B cell (primary cell): ENCODE measurements at regions of chr7 and their contacts with region 1.

Region 1: DNA sequence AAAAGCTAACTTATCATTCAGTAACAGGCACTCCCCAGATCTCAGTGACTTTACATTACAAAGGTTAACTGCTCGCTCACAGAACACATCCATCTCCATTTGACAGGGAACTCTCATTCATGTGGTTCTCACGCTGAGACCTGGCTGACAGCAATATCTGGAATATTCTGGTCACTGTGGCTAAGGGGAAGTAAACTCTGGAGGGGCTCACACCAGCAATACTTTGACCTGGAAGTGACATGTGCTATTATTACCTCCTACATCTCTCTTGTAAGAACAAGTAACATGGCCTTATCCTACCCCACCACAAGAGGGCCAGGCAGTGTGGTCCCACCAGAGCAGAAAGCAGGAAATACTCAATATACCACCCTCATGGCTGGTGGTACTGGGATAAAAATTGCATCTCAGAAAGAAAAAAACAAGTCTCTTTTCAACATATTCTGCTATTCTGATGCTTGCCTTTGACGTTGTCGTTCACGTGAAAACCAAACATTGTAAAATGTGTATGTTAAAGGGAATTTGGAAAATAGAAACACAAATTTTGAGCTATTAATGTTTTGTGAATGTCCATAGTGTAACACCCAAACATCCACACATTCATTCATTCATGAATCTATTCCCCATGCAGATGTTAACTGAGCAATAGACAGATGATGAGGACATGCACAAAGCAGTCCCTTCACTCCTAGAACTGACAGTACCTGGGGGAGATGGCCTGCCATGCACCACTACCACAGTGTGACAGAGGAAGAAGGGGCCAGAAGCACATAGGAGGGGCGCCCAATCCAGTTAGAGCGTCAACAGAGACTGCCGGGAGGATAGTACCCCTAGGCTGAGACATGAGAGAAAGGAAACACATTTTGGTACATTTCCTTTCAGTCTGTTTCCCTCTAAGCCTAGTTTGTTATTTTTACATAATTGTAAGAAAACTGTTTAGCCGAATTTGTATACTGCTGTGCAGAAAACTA is 166.0 kb upstream of the SP4 start:
- DNase-seq: peak; percentile 73
- ATAC-seq: peak; percentile 93
- H3K4me3 ChIP-seq: no peak overlapping the region
- H3K4me3 Mint-ChIP-seq: peak overlapping the region; percentile 14
- H3K27ac ChIP-seq: peak overlapping the region in 1 of 2 donors; percentile 28
- H3K27ac Mint-ChIP-seq: peak overlapping the region; percentile 67
- H3K4me1 ChIP-seq: peaks cover 12% of the 10 kb centered on the region in 2 donors
- H3K4me1 Mint-ChIP-seq: peaks cover 14% of the 10 kb centered on the region
- H3K27me3 ChIP-seq: no peaks in the 10 kb centered on the region
- H3K27me3 Mint-ChIP-seq: no peaks in the 10 kb centered on the region
- CTCF ChIP-seq: peak; percentile 73

Region 2: GRCh38 chr7:21507626-21508343 is 245.9 kb after region 1 on chr7:
- CTCF ChIA-PET with region 1: interaction called, 28 read pairs
- POLR2A ChIA-PET with region 1: no interaction called
- intact Hi-C with region 1: loop called (anchors 1 kb)
- DNase-seq: peak; percentile 43
- ATAC-seq: no peak
- H3K4me3 ChIP-seq: no peak overlapping the region
- H3K4me3 Mint-ChIP-seq: no peak overlapping the region
- H3K27ac ChIP-seq: no peak overlapping the region
- H3K27ac Mint-ChIP-seq: peak overlapping the region; percentile 29
- H3K4me1 ChIP-seq: no peaks in the 10 kb centered on the region
- H3K4me1 Mint-ChIP-seq: peaks cover 2% of the 10 kb centered on the region
- H3K27me3 ChIP-seq: no peaks in the 10 kb centered on the region
- H3K27me3 Mint-ChIP-seq: no peaks in the 10 kb centered on the region
- CTCF ChIP-seq: peak; percentile 66

Region 3: GRCh38 chr7:21568762-21569161 is 306.9 kb after region 1 on chr7:
- CTCF ChIA-PET with region 1: interaction called, 10 read pairs
- POLR2A ChIA-PET with region 1: no interaction called
- intact Hi-C with region 1: loop called (anchors 1 kb)
- DNase-seq: peak; percentile 18
- ATAC-seq: no peak
- H3K4me3 ChIP-seq: no peak overlapping the region
- H3K4me3 Mint-ChIP-seq: no peak overlapping the region
- H3K27ac ChIP-seq: no peak overlapping the region
- H3K27ac Mint-ChIP-seq: no peak overlapping the region
- H3K4me1 ChIP-seq: no peaks in the 10 kb centered on the region
- H3K4me1 Mint-ChIP-seq: no peaks in the 10 kb centered on the region
- H3K27me3 ChIP-seq: no peaks in the 10 kb centered on the region
- H3K27me3 Mint-ChIP-seq: peaks cover 19% of the 10 kb centered on the region
- CTCF ChIP-seq: peak; percentile 21

Region 4: DNA sequence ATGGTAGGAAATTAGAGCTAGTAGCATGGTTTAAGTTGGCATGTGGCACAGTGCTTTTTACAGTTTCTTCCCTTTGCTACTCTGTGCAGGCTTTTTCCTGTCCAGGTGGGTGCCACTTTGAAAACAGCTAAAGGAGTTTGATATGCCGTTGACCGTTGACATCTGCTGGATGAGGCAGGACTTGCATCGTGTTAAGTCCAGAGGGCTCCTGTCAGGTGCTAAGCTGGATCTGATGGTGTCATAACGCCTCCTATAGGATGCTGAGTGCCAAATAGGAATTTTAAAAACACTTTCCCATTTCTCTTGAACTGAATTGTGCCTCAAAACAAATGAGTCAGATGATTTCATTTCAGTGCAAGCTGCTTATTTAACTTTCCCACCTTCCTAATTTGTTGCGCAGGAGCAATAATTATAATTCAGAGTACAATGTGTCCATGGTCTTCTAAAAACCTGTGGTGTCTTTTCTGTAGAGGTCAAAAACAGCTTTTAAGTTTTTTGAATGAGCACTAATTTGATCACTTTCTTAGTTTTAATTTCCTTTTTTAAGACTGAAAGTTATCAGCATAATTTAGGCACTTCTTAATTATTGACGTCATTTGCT is 505.5 kb after region 1 on chr7:
- CTCF ChIA-PET with region 1: interaction called, 11 read pairs
- POLR2A ChIA-PET with region 1: no interaction called
- intact Hi-C with region 1: loop called (anchors 1 kb)
- DNase-seq: peak; percentile 29
- ATAC-seq: peak; percentile 36
- H3K4me3 ChIP-seq: no peak overlapping the region
- H3K4me3 Mint-ChIP-seq: no peak overlapping the region
- H3K27ac ChIP-seq: no peak overlapping the region
- H3K27ac Mint-ChIP-seq: no peak overlapping the region
- H3K4me1 ChIP-seq: no peaks in the 10 kb centered on the region
- H3K4me1 Mint-ChIP-seq: no peaks in the 10 kb centered on the region
- H3K27me3 ChIP-seq: no peaks in the 10 kb centered on the region
- H3K27me3 Mint-ChIP-seq: peaks cover 20% of the 10 kb centered on the region
- CTCF ChIP-seq: peak; percentile 32

Region 5: DNA sequence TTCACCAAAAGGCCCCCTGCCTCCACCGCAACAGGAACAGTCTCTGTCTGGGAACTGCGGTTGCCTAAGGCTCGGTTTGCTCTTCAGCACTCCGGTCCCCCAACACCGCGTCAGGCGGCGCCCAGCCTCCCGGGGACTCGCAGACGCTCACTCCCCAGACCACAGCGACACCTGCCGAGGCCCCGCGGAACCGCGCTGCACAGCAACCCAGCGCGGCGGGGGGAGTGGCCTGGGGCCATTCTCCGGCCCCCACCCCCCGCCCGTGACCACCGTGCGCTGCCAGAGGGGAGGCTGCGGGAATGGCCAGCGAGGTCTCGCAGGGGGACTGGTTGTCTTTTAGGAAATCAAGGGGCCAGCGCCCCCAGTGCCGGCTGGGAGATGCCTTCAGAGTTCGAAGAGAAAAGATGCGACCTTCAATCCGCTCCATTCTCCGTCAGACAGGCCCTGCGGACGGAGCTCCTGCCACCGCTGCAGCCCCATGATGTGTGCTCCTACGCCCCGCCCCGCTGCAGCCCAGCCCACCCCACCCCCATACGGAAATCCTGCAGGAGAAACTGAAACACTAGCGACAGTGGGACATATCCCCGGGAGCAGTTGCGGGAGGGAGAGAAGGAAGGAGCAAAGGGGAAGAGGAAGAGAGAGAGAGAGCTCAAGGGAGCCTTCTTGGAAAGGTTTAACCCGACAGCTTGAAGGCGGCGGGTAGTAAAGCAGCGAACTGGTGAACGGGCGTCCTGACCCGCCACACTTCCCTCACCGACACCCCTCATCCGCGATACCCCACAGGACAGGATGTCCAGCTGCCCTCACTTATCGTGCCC is 821.2 kb after region 1 on chr7:
- CTCF ChIA-PET with region 1: interaction called, 10 read pairs
- POLR2A ChIA-PET with region 1: no interaction called
- intact Hi-C with region 1: no loop called
- DNase-seq: peak; percentile 92
- ATAC-seq: peak; percentile 97
- H3K4me3 ChIP-seq: peak overlapping the region; percentile 58 to 80 (median 72)
- H3K4me3 Mint-ChIP-seq: peak overlapping the region; percentile 94
- H3K27ac ChIP-seq: peak overlapping the region; percentile 63 to 68
- H3K27ac Mint-ChIP-seq: peak overlapping the region; percentile 90
- H3K4me1 ChIP-seq: peaks cover 8 to 14% of the 10 kb centered on the region in 2 donors
- H3K4me1 Mint-ChIP-seq: peaks cover 18% of the 10 kb centered on the region
- H3K27me3 ChIP-seq: peaks cover 0 to 11% (median 7%) of the 10 kb centered on the region in 4 experiments
- H3K27me3 Mint-ChIP-seq: peaks cover 25% of the 10 kb centered on the region
- CTCF ChIP-seq: peak; percentile 98